Activated CD4-positive, alpha-beta memory T cell treated with anti-CD3 and anti-CD28 coated beads for 36 hours (primary cell): ENCODE measurements at regions of chr20 and their contacts with region 1.

Region 1: DNA sequence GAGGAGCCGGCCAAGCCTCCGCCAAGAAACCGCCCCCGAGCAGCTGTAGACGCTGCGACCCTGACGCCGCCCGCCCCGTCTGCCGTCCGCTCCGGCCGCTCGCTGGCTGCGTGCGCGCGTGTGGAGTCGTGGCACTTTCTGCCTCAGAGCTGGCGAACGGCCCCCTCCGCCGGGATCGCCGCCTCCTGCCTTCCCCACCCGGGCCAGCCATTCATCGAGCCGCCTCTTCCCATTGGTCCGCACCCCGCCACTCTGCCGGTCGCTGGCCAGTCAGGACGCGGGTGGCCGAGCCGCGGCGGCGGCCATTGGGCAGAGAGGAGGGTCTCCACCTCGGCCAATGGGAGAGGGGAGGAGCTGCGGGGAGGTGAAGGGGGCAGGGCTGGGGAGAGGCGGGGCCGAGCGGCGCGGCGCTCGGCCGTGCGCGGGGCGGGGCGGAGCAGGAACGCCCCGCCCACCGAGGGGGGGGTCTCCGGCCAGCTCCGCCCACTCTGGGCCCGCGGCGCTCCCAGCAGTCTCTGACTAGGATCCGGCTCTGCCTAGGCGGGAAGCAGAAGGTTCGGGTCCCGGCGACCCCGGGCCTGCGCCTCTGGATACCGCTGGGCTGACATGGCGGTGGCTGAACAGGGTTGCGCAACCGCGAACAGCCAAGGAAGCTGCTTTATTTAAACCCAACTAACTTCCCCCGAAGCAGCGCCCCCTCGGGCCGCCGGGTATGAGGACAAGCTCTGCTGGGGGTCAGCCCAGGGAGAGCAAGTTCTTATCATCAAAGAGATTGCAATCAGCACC is at the start of gene RRBP1:
- DNase-seq: peak; percentile 98
- H3K4me3 Mint-ChIP-seq: peak within 1 kb of the TSS; percentile 81
- H3K27ac Mint-ChIP-seq: peak within 1 kb of the TSS; percentile 79
- H3K4me1 Mint-ChIP-seq: peaks cover 18% of the 10 kb centered on the region
- H3K27me3 Mint-ChIP-seq: peaks cover 23% of the 10 kb centered on the region
- total RNA-seq, gene RRBP1: 29.6 to 32.0 TPM

Region 2: DNA sequence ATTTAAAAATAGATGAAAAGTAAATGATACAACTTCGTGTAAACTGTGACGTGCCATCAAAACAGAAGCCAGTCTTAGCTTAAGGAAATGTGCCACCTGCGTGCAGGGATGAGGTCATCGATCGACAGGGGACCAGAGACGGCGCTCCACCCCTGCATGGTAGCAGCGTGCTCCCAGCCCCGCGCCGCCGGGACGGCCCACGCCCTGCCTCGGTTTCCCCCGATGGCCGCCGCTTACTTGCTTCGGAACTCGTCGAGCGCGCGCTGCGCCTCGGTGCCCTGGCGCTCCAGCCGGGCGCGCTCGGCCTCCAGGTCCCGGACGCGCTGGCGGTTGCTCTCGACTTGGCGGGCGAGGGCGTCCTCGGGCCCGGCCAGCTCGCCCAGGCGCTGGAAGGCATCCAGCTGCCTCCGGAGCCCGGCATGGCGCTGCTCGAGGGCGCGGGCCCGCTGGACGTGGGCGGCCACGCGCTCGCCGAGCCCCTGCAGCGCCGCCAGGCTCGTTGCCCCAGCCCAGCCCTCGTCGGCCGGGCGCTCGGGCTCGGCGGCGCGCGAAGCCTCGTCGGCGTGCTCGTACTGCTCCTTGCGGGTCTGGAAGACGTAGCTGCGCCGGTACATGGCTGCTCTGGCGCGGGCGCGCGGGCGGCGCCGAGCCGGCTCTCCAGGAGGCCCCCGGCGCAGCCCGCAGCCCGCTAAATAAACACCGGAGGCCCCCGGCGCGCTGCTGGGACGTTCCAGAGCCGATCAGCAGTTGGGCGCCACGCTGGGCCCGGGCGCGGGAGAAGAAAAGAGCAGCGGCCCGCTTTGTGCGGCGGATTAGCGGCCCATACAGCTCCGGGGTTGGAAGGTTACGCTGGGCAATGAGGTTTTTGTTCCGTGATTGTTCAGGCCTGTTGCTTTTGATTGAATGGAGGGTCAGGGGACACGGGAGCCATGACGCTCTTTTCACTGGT is 151.3 kb before region 1 on chr20 and contains the start of gene BFSP1:
- CTCF ChIA-PET with region 1: interaction called, 15 read pairs
- POLR2A ChIA-PET with region 1: interaction called, 5 read pairs
- intact Hi-C with region 1: loop called (anchors 2 kb)
- DNase-seq: peak; percentile 72
- H3K4me3 Mint-ChIP-seq: peak within 1 kb of the TSS; percentile 88
- H3K27ac Mint-ChIP-seq: peak within 1 kb of the TSS; percentile 70
- H3K4me1 Mint-ChIP-seq: peaks cover 17% of the 10 kb centered on the region
- H3K27me3 Mint-ChIP-seq: peaks cover 3% of the 10 kb centered on the region
- total RNA-seq, gene BFSP1: 0.34 to 0.36 TPM

Region 3: GRCh38 chr20:17666481-17666880 is 15.8 kb before region 1 on chr20:
- CTCF ChIA-PET with region 1: interaction called, 48 read pairs
- POLR2A ChIA-PET with region 1: interaction called, 8 read pairs
- intact Hi-C with region 1: loop called (anchors 2 kb)
- DNase-seq: peak; percentile 3
- H3K4me3 Mint-ChIP-seq: no peak overlapping the region
- H3K27ac Mint-ChIP-seq: no peak overlapping the region
- H3K4me1 Mint-ChIP-seq: peaks cover 43% of the 10 kb centered on the region
- H3K27me3 Mint-ChIP-seq: no peaks in the 10 kb centered on the region

Region 4: GRCh38 chr20:17898548-17898994 is 216.3 kb after region 1 on chr20:
- CTCF ChIA-PET with region 1: interaction called, 80 read pairs
- POLR2A ChIA-PET with region 1: no interaction called
- intact Hi-C with region 1: loop called (anchors 1 kb)
- DNase-seq: peak; percentile 73
- H3K4me3 Mint-ChIP-seq: no peak overlapping the region
- H3K27ac Mint-ChIP-seq: no peak overlapping the region
- H3K4me1 Mint-ChIP-seq: peaks cover 16% of the 10 kb centered on the region
- H3K27me3 Mint-ChIP-seq: peaks cover 23% of the 10 kb centered on the region

Region 5: GRCh38 chr20:17958373-17959256 is 276.3 kb after region 1 on chr20:
- CTCF ChIA-PET with region 1: interaction called, 20 read pairs
- POLR2A ChIA-PET with region 1: no interaction called
- intact Hi-C with region 1: no loop called
- DNase-seq: no peak
- H3K4me3 Mint-ChIP-seq: no peak overlapping the region
- H3K27ac Mint-ChIP-seq: peak overlapping the region; percentile 49
- H3K4me1 Mint-ChIP-seq: peaks cover 87% of the 10 kb centered on the region
- H3K27me3 Mint-ChIP-seq: no peaks in the 10 kb centered on the region

Region 6: GRCh38 chr20:18137412-18138265 is 455.3 kb after region 1 on chr20 and contains the starts of genes KAT14 and PET117:
- CTCF ChIA-PET with region 1: interaction called, 5 read pairs
- POLR2A ChIA-PET with region 1: no interaction called
- intact Hi-C with region 1: loop called (anchors 5 kb)
- DNase-seq: peak; percentile 93
- H3K4me3 Mint-ChIP-seq: peak within 1 kb of the TSS; percentile 65
- H3K27ac Mint-ChIP-seq: peak within 1 kb of the TSS; percentile 76
- H3K4me1 Mint-ChIP-seq: peaks cover 29% of the 10 kb centered on the region
- H3K27me3 Mint-ChIP-seq: no peaks in the 10 kb centered on the region
- total RNA-seq, gene KAT14: 14.2 to 14.4 TPM
- total RNA-seq, gene PET117: 15.2 to 15.9 TPM